Right cardiac atrium (tissue), 5 donors: ENCODE measurements at regions of chr18 and their contacts with region 1.

Region 1: GRCh38 chr18:70072678-70073077 is 125.0 kb upstream of the CD226 start:
- DNase-seq: no peak
- ATAC-seq: peak in 1 of 2 donors; percentile 68
- H3K4me3 ChIP-seq: no peak overlapping the region
- H3K27ac ChIP-seq: no peak overlapping the region
- H3K4me1 ChIP-seq: no peaks in the 10 kb centered on the region
- H3K27me3 ChIP-seq: no peaks in the 10 kb centered on the region

Region 2: DNA sequence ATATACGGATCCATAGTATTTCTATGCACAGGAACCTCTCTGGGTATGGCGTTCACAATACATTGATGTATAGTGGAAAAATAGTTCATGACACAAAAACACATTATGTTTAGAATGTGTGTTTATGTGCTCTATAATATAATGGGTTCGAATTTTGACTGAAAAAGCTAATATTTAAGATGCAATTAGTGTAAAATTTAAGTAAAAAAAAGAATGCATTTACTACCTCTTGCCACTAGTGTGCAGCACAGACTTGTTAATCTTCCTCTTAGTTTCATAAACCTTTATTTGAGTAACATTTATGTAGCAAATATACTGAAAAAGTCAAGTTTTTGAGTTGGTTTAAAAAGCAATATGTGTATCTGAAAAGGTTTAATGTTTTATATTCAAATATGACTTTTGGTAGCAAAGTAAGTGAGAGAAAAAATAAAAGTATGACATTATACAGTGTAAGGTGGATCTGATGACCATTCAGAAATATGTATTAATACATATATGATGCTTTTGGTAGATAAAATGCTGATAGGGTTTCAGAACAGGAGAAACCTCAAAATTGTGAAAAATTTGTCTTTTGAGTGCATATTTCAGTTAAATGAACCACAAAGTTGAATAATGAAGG is 1225.3 kb before region 1 on chr18:
- intact Hi-C with region 1: loop called in 1 of 4 experiments (anchors 10 kb)
- DNase-seq: no peak
- ATAC-seq: no peak
- H3K4me3 ChIP-seq: no peak overlapping the region
- H3K27ac ChIP-seq: no peak overlapping the region
- H3K4me1 ChIP-seq: no peaks in the 10 kb centered on the region
- H3K27me3 ChIP-seq: no peaks in the 10 kb centered on the region

Region 3: DNA sequence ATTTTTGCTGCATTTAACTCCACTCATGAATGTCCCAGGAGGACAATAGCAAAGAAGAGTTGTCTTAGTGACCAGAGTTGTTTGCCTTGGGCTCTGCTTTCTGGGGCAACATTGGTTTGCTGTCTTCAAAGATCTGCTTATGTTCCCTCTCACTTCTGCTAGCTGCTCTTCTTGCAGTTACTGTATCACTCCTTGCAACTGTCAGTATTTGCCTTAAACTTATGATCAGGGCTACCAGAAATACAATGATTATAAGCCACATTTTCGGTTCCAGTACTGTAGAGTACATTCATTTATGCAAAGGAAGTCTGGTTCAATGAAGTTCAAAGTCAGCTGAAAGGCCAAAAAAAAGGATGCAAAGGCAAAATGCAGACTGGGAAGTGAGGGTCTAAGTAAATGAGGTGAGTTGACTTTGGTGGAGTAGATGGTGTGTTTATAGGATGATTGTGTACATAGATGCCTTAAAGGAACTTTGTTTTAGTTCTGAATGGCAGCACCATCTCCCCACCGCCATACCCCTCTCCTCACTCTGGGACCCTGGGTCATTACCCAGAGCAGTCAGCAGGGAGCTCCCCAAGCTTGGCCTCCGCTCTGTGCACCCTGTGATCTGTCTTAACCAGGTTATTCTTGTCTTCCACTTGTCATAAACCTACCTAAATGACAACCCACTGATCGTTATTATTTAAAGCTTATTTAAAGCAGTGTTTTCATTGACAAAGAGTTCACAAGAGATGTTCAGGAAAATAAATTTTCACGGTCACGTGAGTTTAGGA is 436.0 kb before region 1 on chr18:
- intact Hi-C with region 1: loop called in 1 of 4 experiments (anchors 5 kb)
- DNase-seq: no peak
- ATAC-seq: peak in 1 of 2 donors; percentile 73
- H3K4me3 ChIP-seq: no peak overlapping the region
- H3K27ac ChIP-seq: no peak overlapping the region
- H3K4me1 ChIP-seq: no peaks in the 10 kb centered on the region
- H3K27me3 ChIP-seq: no peaks in the 10 kb centered on the region

Region 4: DNA sequence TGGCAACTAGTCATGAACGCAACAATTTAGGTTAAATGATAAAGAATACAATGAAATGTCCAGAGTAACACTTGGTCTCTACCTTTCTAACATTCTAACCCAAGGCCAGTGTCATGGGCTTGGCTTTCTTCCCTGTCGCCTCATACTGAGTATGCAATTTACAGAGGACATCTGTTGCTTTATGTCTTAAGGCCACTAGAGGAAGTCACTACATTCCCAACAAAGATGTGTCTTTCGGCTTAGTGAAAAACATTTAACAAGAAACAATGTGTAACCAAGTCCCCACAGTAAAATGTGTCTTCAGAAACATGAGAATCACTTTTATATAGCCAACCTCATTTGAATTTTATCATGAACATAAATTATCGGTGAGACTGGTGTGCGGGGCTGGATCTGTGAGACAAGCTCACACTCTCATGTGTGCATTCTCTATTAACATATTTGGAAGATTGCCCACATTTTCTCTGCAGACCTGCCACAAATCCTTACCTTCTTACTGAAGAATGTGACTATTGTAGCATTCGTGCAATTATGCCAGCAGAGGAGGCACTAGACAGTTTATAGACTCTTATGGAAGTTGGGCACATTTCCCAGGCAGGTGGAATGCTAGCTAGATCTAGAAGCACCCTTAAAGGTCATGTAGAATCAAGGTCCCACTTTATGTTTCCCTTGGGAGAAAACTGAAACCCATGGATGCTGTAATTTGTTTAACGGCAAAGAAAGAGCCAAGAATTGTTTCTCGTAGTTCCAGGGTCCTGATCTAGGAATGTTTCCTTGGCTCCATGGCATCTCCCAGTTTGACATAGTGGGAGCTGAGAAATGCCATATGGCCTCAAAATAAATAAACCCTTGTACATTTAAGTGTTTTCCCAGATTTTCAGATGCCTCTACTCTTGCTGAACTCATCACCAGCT is 226.8 kb before region 1 on chr18:
- intact Hi-C with region 1: loop called in 1 of 4 experiments (anchors 10 kb)
- DNase-seq: no peak
- ATAC-seq: peak in 1 of 2 donors; percentile 47
- H3K4me3 ChIP-seq: no peak overlapping the region
- H3K27ac ChIP-seq: no peak overlapping the region
- H3K4me1 ChIP-seq: no peaks in the 10 kb centered on the region
- H3K27me3 ChIP-seq: no peaks in the 10 kb centered on the region